Lower leg skin (tissue), 4 donors: ENCODE measurements at regions of chr7 and their contacts with region 1.

Region 1: DNA sequence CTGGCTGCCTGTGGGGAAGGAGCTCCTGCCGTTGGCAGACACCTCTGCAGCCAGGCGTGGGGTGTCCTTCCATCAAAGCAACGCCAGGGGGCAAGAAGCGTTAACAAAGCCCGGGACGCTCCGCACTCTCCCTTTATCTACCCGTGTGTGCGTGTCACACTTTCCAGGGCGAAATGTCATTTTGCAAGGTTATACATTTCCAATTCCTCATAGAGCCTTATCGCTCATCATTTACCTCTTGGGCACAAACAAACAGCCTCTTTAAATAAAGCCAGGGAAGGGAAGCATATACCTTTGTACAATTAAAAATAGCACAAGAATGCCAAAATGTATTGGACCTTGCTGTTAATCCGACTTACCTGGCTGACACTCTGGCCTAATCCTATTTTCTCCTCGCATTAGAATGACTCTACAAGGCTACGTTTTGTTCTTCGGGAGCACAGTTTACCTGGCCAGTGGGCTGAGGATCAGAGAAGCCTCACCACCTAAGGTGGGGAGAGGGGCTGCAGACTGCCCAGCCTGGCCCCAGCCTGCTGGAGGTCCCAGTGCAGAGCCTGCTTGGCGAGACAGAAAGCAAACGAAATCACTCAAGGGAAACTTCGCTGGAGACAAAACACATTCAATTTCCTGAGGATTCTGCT is 77.6 kb upstream of the EN2 start:
- DNase-seq: peak; percentile 66 to 92
- H3K4me3 ChIP-seq: no peak overlapping the region
- CTCF ChIP-seq: peak in 1 of 3 donors; percentile 20
- POLR2A ChIP-seq: no peak

Region 2: DNA sequence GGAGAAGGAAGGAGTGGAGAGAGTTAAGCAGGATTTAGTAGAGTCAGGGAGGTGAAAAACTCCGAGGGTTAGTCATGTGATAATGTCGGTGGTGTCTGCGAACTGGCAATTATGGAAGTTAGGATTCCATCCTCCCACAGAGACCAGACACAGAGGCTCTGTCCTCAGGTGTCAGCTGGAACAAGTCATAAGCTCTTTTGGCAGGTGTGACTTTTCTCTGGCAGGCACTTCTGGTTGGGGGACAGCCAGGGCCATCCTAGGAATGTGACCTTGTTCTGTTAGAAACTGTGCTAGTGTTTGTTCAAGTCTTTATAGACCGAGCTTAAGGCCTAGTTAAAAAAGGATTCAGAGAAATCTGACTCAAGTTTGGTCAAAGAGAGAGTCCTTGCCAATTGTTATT is 957.1 kb before region 1 on chr7:
- intact Hi-C with region 1: no loop called
- DNase-seq: no peak
- H3K4me3 ChIP-seq: no peak overlapping the region
- CTCF ChIP-seq: no peak
- POLR2A ChIP-seq: no peak

Region 3: DNA sequence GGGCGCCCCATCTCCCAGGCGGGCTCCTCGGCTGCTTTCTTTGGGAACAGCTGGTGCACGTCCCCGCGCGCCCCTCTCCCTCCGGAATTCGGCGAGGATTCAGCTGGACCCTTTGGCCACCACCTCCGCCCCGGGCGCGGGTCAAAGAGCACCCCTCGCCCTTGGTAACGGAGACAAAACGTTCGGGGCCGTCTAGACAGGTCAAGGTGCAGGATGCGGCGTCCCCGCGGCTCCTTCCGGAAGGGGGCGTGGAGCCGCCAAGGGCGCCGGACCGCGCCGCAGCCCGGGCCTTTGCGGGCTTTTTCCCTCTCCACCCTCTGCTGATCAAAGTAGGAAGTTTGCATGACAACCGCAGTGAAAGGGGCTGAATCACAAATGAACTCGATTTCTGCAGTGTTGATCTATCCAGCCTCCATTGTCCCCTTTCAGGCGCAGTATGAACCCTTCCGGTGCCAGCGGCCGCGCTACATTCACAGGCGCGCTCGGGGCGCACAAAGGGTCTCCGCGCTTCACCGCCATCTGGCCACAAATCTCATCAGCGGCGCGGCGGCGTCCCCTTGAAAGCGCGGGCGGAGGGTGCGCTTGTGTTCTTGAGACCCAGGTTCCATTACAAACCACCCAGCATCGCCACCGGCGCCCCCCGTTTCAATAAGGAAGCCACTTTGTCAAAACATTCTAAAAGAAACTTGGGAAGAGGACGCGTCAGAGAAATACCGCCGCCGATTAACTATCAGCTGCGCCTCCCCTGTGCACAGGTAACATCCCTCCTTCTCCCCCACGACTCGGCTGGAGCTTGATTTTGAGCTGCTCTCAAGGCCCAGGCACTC is 129.6 kb after region 1 on chr7:
- intact Hi-C with region 1: loop called (anchors 10 kb)
- DNase-seq: peak in 1 of 2 donors; percentile 79
- H3K4me3 ChIP-seq: no peak overlapping the region
- CTCF ChIP-seq: no peak
- POLR2A ChIP-seq: no peak